ENCODE measurements at regions of chr4 and their contacts with region 1.

Region 1: DNA sequence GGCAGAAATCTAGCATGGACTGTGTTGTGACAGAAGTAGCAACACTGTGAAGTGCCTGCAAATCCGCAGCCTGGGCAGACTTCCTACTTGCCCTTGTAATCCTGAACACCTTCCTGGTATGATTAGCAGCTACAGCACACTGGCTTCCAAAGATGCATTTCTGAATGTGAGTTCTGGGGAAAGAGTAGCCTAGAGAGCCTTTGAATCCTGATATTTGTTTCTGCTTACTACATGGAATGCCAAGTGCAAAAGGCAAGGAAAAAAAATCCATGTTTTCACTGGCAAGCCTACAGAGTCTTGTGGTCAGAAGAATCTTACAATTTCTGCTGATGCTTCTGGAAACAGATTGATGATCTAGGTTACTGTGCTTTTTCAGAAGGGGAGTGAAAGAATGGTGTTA is 223.7 kb downstream of the COL25A1 start:
- DNase-seq: peak; percentile 48
- H3K4me3 ChIP-seq: no peak overlapping the region
- H3K27ac ChIP-seq: no peak overlapping the region
- H3K4me1 ChIP-seq: peaks cover 18% of the 10 kb centered on the region
- H3K27me3 ChIP-seq: no peaks in the 10 kb centered on the region
- CTCF ChIP-seq: no peak
- POLR2A ChIP-seq: no peak

Region 2: GRCh38 chr4:109026588-109026987 is 52.1 kb before region 1 on chr4:
- CTCF ChIA-PET with region 1: no interaction called
- POLR2A ChIA-PET with region 1: interaction called, 5 read pairs
- dilution Hi-C with region 1: no loop called
- intact Hi-C with region 1: loop called (anchors 2 kb)
- DNase-seq: peak; percentile 56
- H3K4me3 ChIP-seq: peak overlapping the region in 1 of 3 experiments; percentile 46
- H3K27ac ChIP-seq: peak overlapping the region; percentile 86
- H3K4me1 ChIP-seq: peaks cover 23% of the 10 kb centered on the region
- H3K27me3 ChIP-seq: no peaks in the 10 kb centered on the region
- CTCF ChIP-seq: no peak
- POLR2A ChIP-seq: no peak

Measured in endothelial cell of umbilical vein (primary cell).